ENCODE measurements at regions of chr19 and their contacts with region 1.

Region 1: GRCh38 chr19:39480337-39481228 is at the start of gene TIMM50:
- DNase-seq: peak; percentile 79 to 98
- H3K4me3 ChIP-seq: peak within 1 kb of the TSS; percentile 68 to 83
- H3K27ac ChIP-seq: peak within 1 kb of the TSS; percentile 38 to 82
- H3K4me1 ChIP-seq: peaks cover 4 to 12% of the 10 kb centered on the region in 2 donors
- H3K27me3 ChIP-seq: no peaks in the 10 kb centered on the region
- CTCF ChIP-seq: no peak
- total RNA-seq, gene TIMM50: 92.0 TPM

Region 2: GRCh38 chr19:38073841-38074685 is 1406.5 kb before region 1 on chr19:
- intact Hi-C with region 1: no loop called
- DNase-seq: no peak
- H3K4me3 ChIP-seq: no peak overlapping the region
- H3K27ac ChIP-seq: no peak overlapping the region
- H3K4me1 ChIP-seq: no peaks in the 10 kb centered on the region
- H3K27me3 ChIP-seq: no peaks in the 10 kb centered on the region
- CTCF ChIP-seq: no peak

Region 3: DNA sequence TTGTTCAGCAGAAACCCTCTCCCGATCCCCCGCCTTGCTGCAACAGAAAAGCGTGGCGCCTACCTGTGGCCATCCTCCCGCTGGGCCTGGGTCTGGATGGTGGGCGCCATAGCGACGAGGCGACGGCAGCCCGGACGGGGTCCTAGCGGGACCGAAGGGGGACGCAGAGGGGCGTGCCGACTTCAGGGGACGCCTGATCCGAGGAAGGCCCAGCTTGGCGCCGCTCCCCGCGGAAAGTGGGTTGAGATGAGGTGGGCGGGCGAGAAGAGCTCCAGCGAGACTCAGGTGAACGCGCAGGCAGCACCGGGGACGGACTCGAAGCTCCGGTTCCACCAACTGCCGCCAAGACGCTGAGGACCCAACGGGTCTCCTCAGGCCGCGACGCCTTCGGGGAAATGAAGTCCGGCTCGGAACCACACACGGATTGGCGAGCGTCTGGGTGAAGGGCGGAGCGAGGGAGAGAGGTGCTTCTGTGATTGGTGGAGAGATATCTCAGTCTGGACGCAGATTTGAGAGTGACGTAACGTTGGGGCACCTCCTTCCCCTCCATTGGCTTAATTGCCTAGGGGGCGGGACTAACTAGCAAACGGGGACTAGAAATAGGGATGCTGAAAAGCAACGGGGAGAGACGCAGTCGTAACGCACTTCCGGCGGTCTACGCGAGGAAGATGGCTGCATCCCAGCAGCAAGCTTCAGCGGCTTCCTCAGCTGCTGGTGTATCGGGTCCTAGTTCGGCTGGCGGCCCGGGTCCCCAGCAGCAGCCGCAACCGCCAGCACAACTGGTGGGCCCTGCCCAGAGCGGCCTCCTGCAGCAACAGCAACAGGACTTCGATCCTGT is 89.6 kb before region 1 on chr19 and contains the starts of genes MED29 and PAF1:
- intact Hi-C with region 1: loop called (anchors 2 kb)
- DNase-seq: peak; percentile 94 to 99
- H3K4me3 ChIP-seq: peak within 1 kb of the TSS; percentile 78 to 93
- H3K27ac ChIP-seq: peak within 1 kb of the TSS; percentile 98 to 100
- H3K4me1 ChIP-seq: peaks cover 8 to 21% of the 10 kb centered on the region in 2 donors
- H3K27me3 ChIP-seq: no peaks in the 10 kb centered on the region
- CTCF ChIP-seq: peak in 1 of 3 experiments; percentile 8
- total RNA-seq, gene MED29: 60.8 TPM
- total RNA-seq, gene PAF1: 12.7 TPM

Region 4: GRCh38 chr19:39435499-39436349 is 44.9 kb before region 1 on chr19 and contains the start of gene RPS16:
- intact Hi-C with region 1: loop called (anchors 2 kb)
- DNase-seq: peak; percentile 92 to 99
- H3K4me3 ChIP-seq: peak within 1 kb of the TSS; percentile 72 to 82
- H3K27ac ChIP-seq: peak within 1 kb of the TSS; percentile 72 to 85
- H3K4me1 ChIP-seq: peaks cover 10 to 23% of the 10 kb centered on the region in 2 donors
- H3K27me3 ChIP-seq: no peaks in the 10 kb centered on the region
- CTCF ChIP-seq: no peak
- total RNA-seq, gene RPS16: 1,453 TPM

Region 5: DNA sequence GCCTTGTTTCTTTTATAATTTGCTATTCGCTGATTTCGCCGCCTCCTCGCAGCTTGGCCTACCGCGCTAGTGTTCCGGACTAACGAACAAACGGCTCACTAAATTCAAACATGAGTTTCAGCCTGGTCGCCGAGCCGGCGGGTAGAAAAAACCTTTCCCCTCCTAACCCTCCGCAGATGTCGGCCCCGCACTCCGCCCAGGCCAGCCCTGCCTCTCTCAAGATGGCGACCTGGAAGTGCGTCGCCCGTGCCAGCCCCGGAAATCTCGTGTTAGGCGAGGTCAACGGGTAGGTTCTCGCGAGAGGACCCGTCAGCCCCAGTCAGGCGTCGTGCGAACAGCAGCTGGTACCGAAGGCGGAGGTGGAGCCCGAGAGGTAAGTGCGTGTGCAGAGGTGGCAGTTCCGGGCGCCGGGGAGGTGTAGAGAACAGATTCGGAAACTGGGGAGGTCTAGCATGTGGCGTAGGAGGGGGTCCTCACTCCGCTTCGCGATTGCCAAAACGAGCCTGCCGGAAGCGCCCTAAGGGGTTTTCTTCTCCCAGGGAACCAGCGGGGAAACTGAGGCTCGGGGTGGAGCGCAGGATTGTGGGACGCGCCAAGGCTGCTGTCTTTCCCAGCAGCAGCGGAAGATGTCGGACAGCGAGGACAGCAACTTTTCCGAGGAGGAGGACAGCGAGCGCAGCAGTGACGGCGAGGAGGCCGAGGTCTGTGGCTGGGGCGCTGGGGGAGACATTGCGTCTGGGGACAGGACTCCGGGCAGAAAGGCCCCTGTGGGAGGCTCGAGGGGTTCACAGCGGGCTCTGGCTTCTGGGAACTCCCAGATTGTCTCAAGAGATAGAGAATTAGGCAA is 35.1 kb before region 1 on chr19 and contains the start of gene SUPT5H:
- intact Hi-C with region 1: loop called (anchors 2 kb)
- DNase-seq: peak; percentile 88 to 99
- H3K4me3 ChIP-seq: peak within 1 kb of the TSS; percentile 86 to 92
- H3K27ac ChIP-seq: peak within 1 kb of the TSS; percentile 91 to 96
- H3K4me1 ChIP-seq: peaks cover 13 to 32% of the 10 kb centered on the region in 2 donors
- H3K27me3 ChIP-seq: no peaks in the 10 kb centered on the region
- CTCF ChIP-seq: no peak
- total RNA-seq, gene SUPT5H: 142 TPM